ENCODE measurements at regions of chr13 and their contacts with region 1.

Region 1: DNA sequence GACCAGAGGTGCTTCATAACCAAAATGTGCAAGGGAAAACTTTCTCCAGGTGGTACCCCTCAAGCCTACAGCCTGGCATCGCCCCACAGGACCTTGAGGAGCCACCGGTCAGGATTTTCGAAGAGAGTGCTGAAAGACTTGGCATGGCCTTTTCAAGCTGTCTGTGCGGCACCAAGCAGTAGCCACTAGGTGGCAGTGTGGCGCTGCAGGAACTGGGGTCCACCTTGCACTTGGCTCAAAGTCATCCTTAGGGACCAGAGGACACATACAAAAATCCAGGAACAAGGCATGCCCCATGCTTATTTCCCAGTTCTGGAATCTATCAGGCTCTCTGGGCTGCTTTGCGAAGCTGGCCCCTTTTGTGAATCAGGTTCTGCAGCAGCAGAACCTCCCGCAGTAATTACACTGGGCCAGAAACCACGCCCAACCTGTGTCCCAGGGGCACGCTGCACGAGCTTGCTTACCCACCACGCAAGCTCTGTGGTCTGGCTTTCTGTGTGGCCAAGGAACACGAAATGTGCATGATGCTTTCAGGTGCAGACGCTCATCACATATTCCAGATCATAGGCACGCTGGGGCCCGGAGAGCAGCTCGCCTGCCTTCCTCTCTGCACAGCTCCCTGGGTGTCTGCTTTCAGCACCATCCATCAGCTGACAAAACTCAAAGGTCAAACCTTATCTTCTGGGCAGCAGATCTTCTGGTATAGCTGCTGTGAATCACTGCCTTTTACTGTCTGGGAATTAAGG is 87.2 kb downstream of the SLC7A1 start:
- DNase-seq: peak; percentile 40
- H3K4me3 ChIP-seq: no peak overlapping the region
- CTCF ChIP-seq: peak; percentile 93

Region 2: GRCh38 chr13:29059800-29060199 is 448.5 kb before region 1 on chr13:
- CTCF ChIA-PET with region 1: no interaction called
- POLR2A ChIA-PET with region 1: no interaction called
- DNase-seq: no peak
- H3K4me3 ChIP-seq: no peak overlapping the region
- CTCF ChIP-seq: no peak

Region 3: GRCh38 chr13:29310806-29311205 is 197.5 kb before region 1 on chr13:
- CTCF ChIA-PET with region 1: no interaction called
- POLR2A ChIA-PET with region 1: no interaction called
- DNase-seq: no peak
- H3K4me3 ChIP-seq: no peak overlapping the region
- CTCF ChIP-seq: no peak

Region 4: DNA sequence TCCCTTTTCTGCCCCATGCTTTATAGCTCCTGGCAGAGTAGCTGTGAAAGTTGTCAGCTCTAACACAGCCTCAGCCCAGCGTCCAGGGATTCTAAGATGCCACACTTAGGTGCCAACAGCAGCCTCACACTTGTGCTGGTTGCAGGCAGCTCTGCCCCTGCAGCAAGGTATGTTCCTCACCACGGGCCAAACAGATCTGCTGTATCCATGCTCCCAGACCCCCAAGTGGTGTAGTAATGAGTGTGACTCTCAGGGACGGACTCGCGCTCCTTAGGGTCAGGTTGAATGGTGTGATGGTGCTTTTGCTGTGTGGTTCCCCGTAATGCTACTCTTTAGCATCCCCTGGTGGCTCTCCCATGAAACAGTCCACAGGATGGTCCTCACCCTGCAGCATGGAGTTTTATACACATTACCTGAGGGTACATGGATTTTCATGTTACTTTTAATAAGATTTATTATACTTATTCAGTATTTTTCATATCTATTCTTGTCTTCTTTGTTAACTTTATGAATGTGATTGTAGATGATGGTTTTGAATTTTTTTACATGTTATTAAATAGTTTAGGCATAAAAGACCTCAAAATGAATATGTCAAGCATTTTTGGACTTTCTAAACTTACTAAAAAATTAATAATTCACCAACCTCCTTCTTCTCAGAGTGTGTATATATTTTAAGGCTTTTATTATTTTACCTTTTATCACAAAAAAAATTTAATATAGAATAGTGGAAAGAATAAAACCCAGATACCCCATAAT is 145.3 kb before region 1 on chr13:
- CTCF ChIA-PET with region 1: no interaction called
- POLR2A ChIA-PET with region 1: no interaction called
- DNase-seq: no peak
- H3K4me3 ChIP-seq: no peak overlapping the region
- CTCF ChIP-seq: peak; percentile 94

Region 5: DNA sequence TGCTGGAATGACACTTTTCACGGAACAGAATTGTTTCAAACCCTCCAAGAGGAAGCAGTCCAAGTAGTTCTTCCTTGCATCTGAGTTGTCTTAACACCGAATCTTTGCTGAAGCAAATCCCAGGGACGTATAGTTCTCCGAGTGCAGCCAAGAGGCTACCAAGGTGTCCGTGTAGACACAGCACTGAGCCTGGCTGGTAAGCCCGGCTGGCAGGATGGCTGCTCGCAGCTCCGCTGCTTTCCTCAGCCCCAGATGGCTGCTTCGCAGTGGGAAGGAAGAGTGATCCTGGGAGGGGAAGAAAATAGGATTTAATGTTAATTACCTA is 17.8 kb before region 1 on chr13:
- CTCF ChIA-PET with region 1: interaction called, 64 read pairs
- POLR2A ChIA-PET with region 1: no interaction called
- DNase-seq: no peak
- H3K4me3 ChIP-seq: no peak overlapping the region
- CTCF ChIP-seq: no peak

Region 6: DNA sequence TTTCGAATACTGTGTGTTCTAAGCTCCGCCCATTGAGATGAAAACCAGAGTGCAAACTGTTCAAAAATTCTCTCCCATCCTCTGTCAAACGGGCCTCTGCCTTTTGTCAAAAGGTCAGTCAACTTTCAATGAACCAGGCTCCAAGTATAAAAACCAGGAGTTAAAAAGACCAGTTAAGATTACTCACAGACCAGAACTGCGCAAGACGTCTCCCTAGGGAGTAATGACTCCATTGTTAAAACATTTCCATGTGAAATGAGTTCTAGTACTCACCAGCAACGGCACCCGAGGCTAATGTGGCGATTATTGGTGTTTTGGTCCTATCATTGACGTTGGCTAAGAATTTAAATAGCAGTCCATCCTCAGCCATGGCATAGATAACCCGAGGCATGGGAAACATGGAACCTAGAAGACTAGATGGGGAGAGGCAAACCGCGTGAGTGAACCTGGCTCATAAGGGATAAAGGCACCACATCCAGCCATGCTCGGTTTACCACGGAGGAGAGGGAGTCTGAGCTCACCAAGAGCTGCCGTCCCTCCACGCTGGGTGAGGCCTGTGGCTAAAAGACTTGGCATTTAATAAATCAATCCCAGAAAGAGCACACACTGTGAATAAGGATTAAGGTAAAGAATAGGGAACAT is 13.9 kb after region 1 on chr13:
- CTCF ChIA-PET with region 1: interaction called, 95 read pairs
- POLR2A ChIA-PET with region 1: no interaction called
- DNase-seq: peak; percentile 95
- H3K4me3 ChIP-seq: no peak overlapping the region
- CTCF ChIP-seq: no peak

Region 7: DNA sequence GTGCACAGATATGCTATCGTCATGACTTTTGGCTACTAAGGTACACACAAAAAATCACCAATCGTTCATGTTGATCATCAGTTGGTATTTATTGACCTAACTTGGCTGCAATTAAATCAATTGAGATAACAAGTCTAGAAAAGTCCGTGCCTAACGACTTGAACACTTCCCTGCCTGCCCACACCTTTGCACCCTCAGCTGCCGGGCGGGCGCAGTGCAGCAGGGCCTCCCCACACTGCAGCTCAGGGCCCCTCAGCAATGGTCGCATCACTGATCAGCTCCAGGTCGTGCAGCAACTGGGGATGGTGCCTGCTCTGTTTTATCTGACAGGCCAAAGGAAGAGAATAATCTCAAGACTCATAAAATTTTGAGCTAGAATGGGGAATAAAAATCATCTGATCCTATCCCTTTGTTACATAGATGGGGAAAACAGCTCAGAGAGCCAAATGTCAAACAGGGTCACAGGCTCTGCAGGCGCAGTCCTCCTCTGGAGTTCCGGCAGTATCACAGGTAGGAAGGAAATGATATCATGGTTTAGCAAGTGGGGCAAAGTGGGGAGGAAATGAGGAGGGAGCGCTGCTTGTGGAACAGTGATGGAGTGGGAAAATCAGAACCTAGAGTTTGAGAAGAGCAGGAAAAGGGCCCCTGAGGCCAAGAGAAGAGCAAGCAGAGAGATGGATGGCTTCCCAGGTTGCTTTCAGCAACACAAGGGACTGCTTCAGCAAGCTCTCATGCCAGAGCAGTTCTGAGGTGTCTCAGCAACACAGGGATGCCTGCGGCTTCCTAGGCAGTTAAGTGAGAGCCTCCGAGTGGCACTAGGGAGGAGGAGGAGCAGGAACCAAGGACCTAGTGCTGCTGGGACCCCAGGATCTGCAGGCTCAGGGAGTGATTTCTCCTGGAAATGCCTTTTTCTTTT is 29.7 kb after region 1 on chr13:
- CTCF ChIA-PET with region 1: interaction called, 13 read pairs
- POLR2A ChIA-PET with region 1: no interaction called
- DNase-seq: no peak
- H3K4me3 ChIP-seq: no peak overlapping the region
- CTCF ChIP-seq: no peak

Region 8: DNA sequence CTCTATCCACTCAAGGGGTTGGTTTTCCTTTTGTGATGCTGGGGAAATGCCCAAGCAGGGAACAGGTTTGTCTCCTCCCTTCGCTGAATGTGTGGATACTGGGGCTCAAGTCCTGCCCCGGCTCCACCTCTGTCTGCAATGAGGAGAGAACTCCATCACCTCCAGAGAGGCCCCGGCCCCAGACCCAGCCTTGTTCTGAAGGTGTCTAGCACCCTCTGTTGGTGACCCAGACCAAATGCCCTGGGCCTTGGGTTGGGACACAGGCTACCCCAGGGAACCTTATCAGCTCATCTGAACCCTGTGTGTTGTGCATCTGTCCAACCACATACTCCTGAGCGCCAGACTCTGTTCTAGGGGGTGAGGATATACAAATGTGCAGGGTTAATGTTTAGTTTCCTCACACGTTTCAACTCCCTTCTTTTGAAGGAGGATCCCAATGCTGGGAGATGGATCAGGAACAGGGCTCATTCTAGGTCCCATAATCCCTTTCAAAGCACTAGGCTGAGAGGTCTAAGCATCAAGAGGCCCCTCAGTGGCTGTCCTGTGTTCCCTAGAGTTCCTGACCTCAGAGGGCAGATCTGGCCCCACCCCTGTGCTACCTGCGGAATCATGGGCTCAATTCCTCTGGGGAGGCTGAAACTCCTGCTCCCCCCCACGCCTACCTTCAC is 199.7 kb after region 1 on chr13:
- CTCF ChIA-PET with region 1: interaction called, 278 read pairs
- POLR2A ChIA-PET with region 1: no interaction called
- DNase-seq: no peak
- H3K4me3 ChIP-seq: no peak overlapping the region
- CTCF ChIP-seq: peak; percentile 76

Region 9: GRCh38 chr13:29749401-29750182 is 241.3 kb after region 1 on chr13:
- CTCF ChIA-PET with region 1: interaction called, 11 read pairs
- POLR2A ChIA-PET with region 1: no interaction called
- DNase-seq: no peak
- H3K4me3 ChIP-seq: no peak overlapping the region
- CTCF ChIP-seq: no peak

Region 10: DNA sequence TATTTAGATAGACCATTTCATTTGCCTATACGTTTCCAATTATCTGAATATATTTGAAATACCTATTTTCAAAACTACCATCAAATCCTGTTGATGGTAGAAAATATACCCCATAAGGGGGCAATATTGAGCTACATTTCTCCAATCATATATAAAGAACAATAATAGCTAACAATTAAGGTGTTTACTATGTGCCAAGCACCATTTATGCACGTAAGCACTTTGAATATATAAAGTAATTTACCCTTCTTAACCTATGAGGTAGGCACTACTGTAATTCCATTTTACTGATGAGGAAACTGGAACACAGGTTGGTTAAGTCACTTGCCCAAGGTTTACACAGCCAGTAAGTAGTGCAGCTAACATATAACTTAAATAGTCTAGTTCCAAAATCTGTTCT is 262.9 kb after region 1 on chr13:
- CTCF ChIA-PET with region 1: interaction called, 24 read pairs
- POLR2A ChIA-PET with region 1: no interaction called
- DNase-seq: no peak
- H3K4me3 ChIP-seq: no peak overlapping the region
- CTCF ChIP-seq: peak; percentile 4